ENCODE measurements at regions of chr19 and their contacts with region 1.

Region 1: GRCh38 chr19:40662921-40663694 is 27.3 kb downstream of the NUMBL start:
- DNase-seq: peak; percentile 95
- ATAC-seq: peak; percentile 89
- H3K4me3 ChIP-seq: peak overlapping the region; percentile 11 to 78 (median 67)
- H3K4me3 Mint-ChIP-seq: peak overlapping the region; percentile 89
- H3K27ac ChIP-seq: peak overlapping the region; percentile 64 to 80
- H3K27ac Mint-ChIP-seq: peak overlapping the region; percentile 94
- H3K4me1 ChIP-seq: peaks cover 11 to 15% of the 10 kb centered on the region in 2 donors
- H3K4me1 Mint-ChIP-seq: peaks cover 19% of the 10 kb centered on the region
- H3K27me3 ChIP-seq: no peaks in the 10 kb centered on the region
- H3K27me3 Mint-ChIP-seq: no peaks in the 10 kb centered on the region
- CTCF ChIP-seq: peak; percentile 96

Region 2: GRCh38 chr19:40690693-40691420 is 27.7 kb after region 1 on chr19:
- CTCF ChIA-PET with region 1: interaction called, 7 read pairs
- POLR2A ChIA-PET with region 1: interaction called, 5 read pairs
- intact Hi-C with region 1: loop called (anchors 1 kb)
- DNase-seq: peak; percentile 93
- ATAC-seq: peak; percentile 74
- H3K4me3 ChIP-seq: peak overlapping the region; percentile 26 to 87 (median 62)
- H3K4me3 Mint-ChIP-seq: peak overlapping the region; percentile 97
- H3K27ac ChIP-seq: peak overlapping the region in 1 of 2 donors; percentile 11
- H3K27ac Mint-ChIP-seq: peak overlapping the region; percentile 88
- H3K4me1 ChIP-seq: peaks cover 44 to 51% of the 10 kb centered on the region in 2 donors
- H3K4me1 Mint-ChIP-seq: peaks cover 13% of the 10 kb centered on the region
- H3K27me3 ChIP-seq: no peaks in the 10 kb centered on the region
- H3K27me3 Mint-ChIP-seq: no peaks in the 10 kb centered on the region
- CTCF ChIP-seq: no peak

Region 3: DNA sequence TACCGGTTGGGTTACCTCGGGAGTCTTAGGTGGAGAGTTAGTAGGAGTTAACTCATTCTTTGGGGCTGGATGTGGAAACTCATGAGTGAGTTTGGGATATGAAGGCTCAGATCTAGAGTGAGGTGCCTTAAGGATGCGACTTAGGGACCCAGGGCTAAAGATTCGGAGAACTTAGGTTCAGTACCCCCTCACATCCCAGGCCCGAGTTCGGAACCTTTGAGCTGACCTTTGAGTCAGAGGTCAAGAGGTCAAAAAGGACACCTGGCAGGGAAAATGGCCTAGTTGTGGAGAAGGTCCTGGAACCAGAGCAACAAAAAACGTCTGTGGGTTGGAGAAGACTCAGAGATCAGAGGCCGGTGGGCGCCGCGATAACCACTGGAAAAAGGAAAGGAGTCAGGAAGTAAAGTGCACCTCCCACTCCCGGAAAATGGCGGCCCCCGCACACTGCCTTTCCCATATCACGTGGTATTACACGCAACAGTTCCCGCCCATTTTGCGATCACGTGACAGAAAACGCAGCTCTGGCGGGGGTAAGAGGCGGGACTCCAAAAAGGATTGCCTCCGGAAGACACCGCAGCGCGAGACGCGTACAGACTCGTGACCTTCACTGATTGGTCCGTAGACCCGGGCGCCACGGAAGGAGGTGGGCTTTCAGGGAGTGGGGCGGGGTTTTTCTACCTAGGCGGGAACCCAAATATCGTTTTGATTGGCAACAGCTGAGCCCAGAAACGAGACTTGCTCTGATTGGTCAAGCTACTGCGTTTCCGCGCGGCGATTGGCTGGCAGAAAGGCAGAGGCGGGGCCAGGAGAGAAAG is 87.2 kb after region 1 on chr19 and contains the start of gene ACTMAP:
- CTCF ChIA-PET with region 1: interaction called, 14 read pairs
- POLR2A ChIA-PET with region 1: interaction called, 10 read pairs
- intact Hi-C with region 1: loop called (anchors 1 kb)
- DNase-seq: peak; percentile 100
- ATAC-seq: peak; percentile 88
- H3K4me3 ChIP-seq: peak within 1 kb of the TSS; percentile 86 to 98 (median 89)
- H3K4me3 Mint-ChIP-seq: peak within 1 kb of the TSS; percentile 93
- H3K27ac ChIP-seq: peak within 1 kb of the TSS; percentile 94 to 97
- H3K27ac Mint-ChIP-seq: peak within 1 kb of the TSS; percentile 95
- H3K4me1 ChIP-seq: peaks cover 29 to 54% of the 10 kb centered on the region in 2 donors
- H3K4me1 Mint-ChIP-seq: peaks cover 41% of the 10 kb centered on the region
- H3K27me3 ChIP-seq: no peaks in the 10 kb centered on the region
- H3K27me3 Mint-ChIP-seq: no peaks in the 10 kb centered on the region
- CTCF ChIP-seq: no peak
- total RNA-seq, gene ACTMAP: 9.8 and 10.2 TPM in 2 replicates

Region 4: DNA sequence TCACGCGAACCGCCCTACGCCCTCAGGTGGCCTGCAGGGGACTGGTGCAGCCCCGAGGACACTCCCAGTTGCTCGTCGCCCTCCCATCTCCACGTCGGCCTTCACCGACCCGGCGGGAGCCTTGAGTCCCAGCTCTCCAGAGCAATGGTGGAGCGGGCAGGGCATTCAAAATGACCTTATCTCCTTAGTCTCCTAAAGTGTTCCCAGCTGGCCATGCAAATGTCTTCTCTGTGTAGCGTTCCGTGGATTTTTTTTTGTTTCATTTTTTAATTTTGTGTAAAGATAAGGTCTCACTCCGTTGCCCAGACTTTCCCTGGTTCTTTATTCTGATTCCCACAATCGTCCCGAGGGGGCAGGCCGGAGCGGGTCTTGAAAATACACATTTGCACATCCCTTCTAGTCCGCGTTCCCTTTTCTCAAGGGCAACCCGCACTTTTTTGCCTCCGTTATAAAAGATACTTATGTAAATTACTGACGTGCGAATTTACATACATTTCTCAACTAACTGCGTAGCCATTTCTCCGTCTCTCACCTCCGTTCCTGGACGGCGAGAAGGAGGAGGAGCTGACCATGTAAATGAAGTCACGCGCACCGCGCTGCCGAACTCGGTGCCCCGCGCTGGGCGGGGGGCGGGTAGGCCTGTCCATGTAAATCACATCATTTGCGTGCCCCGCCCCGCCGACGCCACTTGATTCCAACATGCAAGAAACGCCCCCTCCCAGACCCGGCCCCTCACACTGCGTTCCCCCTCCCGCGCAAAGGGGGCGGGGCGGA is 135.3 kb after region 1 on chr19:
- CTCF ChIA-PET with region 1: interaction called, 8 read pairs
- POLR2A ChIA-PET with region 1: interaction called, 5 read pairs
- intact Hi-C with region 1: loop called (anchors 1 kb)
- DNase-seq: peak; percentile 100
- ATAC-seq: peak; percentile 83
- H3K4me3 ChIP-seq: peak overlapping the region; percentile 59 to 84 (median 67)
- H3K4me3 Mint-ChIP-seq: peak overlapping the region; percentile 90
- H3K27ac ChIP-seq: peak overlapping the region; percentile 85 to 90
- H3K27ac Mint-ChIP-seq: peak overlapping the region; percentile 98
- H3K4me1 ChIP-seq: peaks cover 49% of the 10 kb centered on the region in 2 donors
- H3K4me1 Mint-ChIP-seq: peaks cover 53% of the 10 kb centered on the region
- H3K27me3 ChIP-seq: no peaks in the 10 kb centered on the region
- H3K27me3 Mint-ChIP-seq: no peaks in the 10 kb centered on the region
- CTCF ChIP-seq: peak; percentile 56

Region 5: GRCh38 chr19:40813182-40813958 is 150.3 kb after region 1 on chr19:
- CTCF ChIA-PET with region 1: interaction called, 117 read pairs
- POLR2A ChIA-PET with region 1: interaction called, 6 read pairs
- intact Hi-C with region 1: no loop called
- DNase-seq: no peak
- ATAC-seq: no peak
- H3K4me3 ChIP-seq: no peak overlapping the region
- H3K4me3 Mint-ChIP-seq: peak overlapping the region; percentile 97
- H3K27ac ChIP-seq: no peak overlapping the region
- H3K27ac Mint-ChIP-seq: no peak overlapping the region
- H3K4me1 ChIP-seq: peaks cover 13 to 35% of the 10 kb centered on the region in 2 donors
- H3K4me1 Mint-ChIP-seq: peaks cover 35% of the 10 kb centered on the region
- H3K27me3 ChIP-seq: no peaks in the 10 kb centered on the region
- H3K27me3 Mint-ChIP-seq: no peaks in the 10 kb centered on the region
- CTCF ChIP-seq: no peak

Region 6: GRCh38 chr19:41144403-41144802 is 481.3 kb after region 1 on chr19:
- CTCF ChIA-PET with region 1: interaction called, 20 read pairs
- POLR2A ChIA-PET with region 1: no interaction called
- intact Hi-C with region 1: no loop called
- DNase-seq: peak; percentile 83
- ATAC-seq: peak; percentile 86
- H3K4me3 ChIP-seq: no peak overlapping the region
- H3K4me3 Mint-ChIP-seq: no peak overlapping the region
- H3K27ac ChIP-seq: no peak overlapping the region
- H3K27ac Mint-ChIP-seq: no peak overlapping the region
- H3K4me1 ChIP-seq: no peaks in the 10 kb centered on the region
- H3K4me1 Mint-ChIP-seq: no peaks in the 10 kb centered on the region
- H3K27me3 ChIP-seq: peaks cover 0 to 4% (median 3%) of the 10 kb centered on the region in 4 experiments
- H3K27me3 Mint-ChIP-seq: peaks cover 18% of the 10 kb centered on the region
- CTCF ChIP-seq: peak; percentile 79